Gastrocnemius medialis (tissue), 4 donors: ENCODE measurements at regions of chr1 and their contacts with region 1.

Region 1: GRCh38 chr1:234918181-234918841 is 210.3 kb downstream of the TOMM20 start:
- DNase-seq: no peak
- ATAC-seq: peak; percentile 13 to 21
- H3K4me3 ChIP-seq: no peak overlapping the region
- H3K27ac ChIP-seq: peak overlapping the region; percentile 85 to 94 (median 91)
- H3K4me1 ChIP-seq: peaks cover 69 to 71% of the 10 kb centered on the region in 2 donors
- H3K27me3 ChIP-seq: no peaks in the 10 kb centered on the region
- CTCF ChIP-seq: no peak
- POLR2A ChIP-seq: no peak

Region 2: DNA sequence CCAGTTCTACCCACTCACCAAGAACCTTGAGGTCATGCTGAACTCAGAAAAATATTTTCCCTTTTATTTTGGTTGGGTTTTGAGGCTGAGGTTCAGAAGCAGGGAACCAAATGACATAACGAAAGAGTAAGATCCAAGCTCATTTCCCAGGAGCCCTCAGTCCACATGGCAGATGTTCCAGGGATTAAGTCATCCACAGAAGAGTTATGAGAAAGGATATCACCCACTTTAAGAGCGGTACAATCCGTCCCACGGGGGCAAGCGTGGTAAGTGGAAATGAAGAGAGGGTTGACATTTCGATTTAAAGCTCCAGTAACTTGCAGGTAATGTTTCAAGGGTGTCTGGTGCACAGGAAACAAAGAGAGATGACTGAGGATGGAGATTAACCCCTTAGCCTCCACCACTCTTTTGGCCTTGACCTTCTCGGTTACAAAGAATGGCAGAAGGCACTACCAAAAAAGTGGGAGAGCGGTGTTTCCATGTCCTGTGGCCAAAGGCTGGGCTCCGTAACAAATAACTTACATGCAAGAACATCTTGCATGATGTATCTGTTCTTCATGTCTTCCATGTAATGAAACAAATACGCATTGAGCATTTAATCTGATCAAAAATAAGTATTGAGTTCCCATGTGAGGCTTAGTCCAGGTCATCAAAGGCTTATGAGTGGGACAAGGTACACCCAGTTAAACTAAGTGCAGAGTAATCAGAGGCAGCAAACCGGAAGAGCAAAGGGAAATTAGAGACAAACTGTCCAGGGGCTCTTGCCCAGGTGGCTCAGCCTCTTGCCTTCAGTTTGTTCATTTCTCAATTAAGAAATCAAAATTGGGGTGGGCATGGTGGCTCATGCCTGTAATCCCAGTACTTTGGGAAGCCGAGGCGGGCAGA is 31.1 kb before region 1 on chr1:
- in situ Hi-C with region 1: no loop called
- intact Hi-C with region 1: loop called (anchors 1 kb)
- DNase-seq: peak; percentile 59 to 82
- ATAC-seq: peak; percentile 48 to 57
- H3K4me3 ChIP-seq: peak overlapping the region in 3 of 4 donors; percentile 3 to 42 (median 18)
- H3K27ac ChIP-seq: peak overlapping the region; percentile 90 to 100 (median 96)
- H3K4me1 ChIP-seq: peaks cover 36 to 38% of the 10 kb centered on the region in 2 donors
- H3K27me3 ChIP-seq: no peaks in the 10 kb centered on the region
- CTCF ChIP-seq: no peak
- POLR2A ChIP-seq: peak in 1 of 2 donors; percentile 25

Region 3: DNA sequence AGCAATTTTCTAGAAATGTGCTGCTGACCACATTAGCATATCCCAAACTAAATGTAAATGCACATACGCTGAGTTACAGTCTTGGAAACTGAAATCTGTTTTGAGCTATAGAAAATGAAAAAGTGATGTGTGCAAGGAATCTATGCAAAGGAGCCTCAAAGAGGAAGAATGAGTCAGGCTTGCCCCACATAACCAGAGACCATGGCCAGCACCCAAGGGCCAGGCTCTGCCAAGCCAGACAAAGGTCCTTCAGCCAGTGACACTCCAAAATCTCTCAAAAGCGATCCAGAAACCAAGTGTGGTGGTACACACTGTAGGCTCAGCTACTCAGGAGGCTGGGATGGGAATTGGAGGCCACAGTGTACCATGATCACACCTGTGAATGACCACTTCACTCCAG is 15.2 kb after region 1 on chr1:
- in situ Hi-C with region 1: no loop called
- intact Hi-C with region 1: no loop called
- DNase-seq: peak; percentile 62 to 82
- ATAC-seq: peak; percentile 92 to 93
- H3K4me3 ChIP-seq: no peak overlapping the region
- H3K27ac ChIP-seq: peak overlapping the region; percentile 30 to 54 (median 47)
- H3K4me1 ChIP-seq: peaks cover 13% of the 10 kb centered on the region in 2 donors
- H3K27me3 ChIP-seq: no peaks in the 10 kb centered on the region
- CTCF ChIP-seq: no peak
- POLR2A ChIP-seq: no peak

Region 4: DNA sequence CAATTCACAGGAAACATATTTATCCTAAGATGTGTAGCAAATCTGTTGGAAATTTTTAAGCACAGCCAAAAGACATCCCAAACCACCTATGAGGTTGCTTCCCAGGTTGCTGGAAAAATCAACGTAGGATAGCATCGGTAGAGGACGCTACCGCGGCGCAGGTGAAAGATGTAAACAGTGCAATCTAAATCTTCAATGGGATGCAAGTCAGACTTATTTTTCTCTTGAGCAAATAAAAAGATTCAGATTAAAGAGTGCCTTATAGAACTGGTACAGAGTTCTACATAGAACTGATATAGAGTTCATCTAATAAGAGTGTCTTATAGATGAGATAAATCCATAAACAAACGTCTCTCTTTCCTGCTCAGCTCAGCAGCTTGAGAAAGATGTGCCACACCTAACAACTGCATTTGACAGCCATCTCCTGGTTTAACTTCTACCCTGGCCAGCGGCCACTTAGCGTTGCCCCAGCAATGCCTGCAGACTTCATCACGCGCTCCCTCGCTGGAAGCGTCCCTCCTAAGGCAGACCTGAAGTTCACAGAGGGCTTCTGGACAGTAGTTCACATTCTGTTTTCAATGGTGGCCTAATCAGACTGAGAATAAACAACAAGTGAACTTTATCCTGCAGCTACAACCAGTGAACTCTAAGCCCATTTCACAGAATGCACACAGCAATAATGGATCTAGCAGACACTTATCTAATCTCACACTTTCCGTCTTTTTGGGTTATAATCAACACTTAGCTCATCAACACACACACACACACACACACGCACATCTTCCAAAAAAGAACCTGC is 45.8 kb after region 1 on chr1:
- in situ Hi-C with region 1: no loop called
- intact Hi-C with region 1: loop called (anchors 2 kb)
- DNase-seq: peak; percentile 76 to 80
- ATAC-seq: peak; percentile 82 to 85
- H3K4me3 ChIP-seq: no peak overlapping the region
- H3K27ac ChIP-seq: peak overlapping the region; percentile 56 to 76 (median 74)
- H3K4me1 ChIP-seq: peaks cover 49 to 57% of the 10 kb centered on the region in 2 donors
- H3K27me3 ChIP-seq: no peaks in the 10 kb centered on the region
- CTCF ChIP-seq: no peak
- POLR2A ChIP-seq: no peak